Posterior cingulate gyrus (tissue), 11 donors: ENCODE measurements at regions of chr9 and their contacts with region 1.

Region 1: DNA sequence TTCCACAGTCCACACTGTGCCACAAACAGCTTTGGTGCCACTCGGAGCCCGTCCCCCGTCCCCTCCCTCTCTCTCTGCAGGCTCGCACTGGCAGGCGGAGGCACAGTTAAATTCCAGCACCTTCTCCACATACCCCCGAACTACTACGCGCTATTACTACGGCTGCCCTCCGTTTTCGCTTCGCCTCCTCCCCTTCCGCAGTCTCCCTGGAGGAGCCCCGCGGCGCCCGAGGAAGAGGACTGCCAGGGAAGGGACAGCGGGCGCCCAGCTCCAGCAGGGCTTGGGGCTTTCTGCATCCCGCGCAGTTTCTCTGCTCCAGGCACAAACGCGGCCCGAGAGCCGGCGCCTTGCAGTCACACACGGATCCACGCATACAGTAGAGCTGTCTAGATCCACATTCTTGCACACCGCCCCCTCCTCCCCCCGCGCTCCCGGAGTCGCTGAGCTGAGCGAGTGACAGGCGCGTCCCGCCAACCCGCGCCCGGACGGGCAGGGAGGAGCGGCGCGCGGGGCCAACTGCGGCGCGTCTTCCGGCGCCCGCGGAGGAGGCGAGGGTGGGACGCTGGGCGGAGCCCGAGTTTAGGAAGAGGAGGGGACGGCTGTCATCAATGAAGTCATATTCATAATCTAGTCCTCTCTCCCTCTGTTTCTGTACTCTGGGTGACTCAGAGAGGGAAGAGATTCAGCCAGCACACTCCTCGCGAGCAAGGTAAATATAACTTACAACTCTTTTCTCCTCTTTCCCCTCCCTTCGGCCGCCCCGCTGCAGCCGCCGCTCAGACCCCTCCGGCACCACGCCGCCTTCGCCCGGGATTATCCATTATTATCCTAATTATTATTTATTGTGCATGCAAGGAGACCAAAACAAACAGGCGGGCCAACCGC is at the start of gene SMARCA2:
- DNase-seq: peak; percentile 93 to 100 (median 99)

Region 2: DNA sequence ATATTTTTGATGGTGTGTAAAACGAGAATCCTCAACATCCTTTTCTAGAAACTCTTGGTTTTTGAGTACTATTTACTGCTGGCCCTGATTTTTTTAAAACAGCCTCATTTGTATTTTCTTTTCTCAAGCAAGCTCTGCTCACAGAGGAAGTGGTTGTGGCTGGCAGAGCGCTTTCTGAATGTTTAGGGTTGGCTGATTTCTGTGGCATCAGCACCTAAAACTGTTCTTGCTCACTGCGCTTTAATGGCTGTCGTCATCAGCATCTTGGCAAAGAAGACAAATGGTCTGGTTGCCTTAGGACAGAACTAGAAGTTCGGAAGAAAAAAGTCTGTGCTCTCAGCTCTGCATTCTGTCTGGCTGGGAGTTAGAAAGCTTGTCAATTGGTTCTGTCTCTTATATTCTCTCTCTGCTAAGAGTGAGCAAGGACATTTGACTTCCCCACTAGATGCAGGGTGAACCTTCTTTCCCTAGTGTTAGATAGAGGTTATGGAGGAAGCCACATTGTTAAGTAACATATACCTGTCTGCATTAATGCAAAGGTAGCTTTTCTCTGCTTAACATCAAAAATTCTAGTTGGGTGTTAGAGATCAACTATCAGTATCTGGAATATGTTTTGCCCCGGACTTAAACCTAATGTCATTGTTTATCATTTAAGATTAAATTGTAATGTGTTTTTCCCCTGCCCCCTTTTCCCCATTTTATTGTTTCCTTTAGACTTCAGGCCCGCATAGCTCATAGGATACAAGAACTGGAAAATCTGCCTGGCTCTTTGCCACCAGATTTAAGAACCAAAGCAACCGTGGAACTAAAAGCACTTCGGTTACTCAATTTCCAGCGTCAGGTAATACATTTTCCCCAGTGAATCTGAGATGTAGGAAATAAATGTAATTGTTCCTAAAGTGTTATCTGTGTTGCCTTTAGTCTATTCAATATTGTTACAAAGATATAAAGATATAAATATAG is 39.2 kb after region 1 on chr9:
- intact Hi-C with region 1: loop called (anchors 5 kb)
- DNase-seq: peak in 6 of 10 donors; percentile 24 to 84 (median 41)

Region 3: GRCh38 chr9:2299156-2299842 is 284.4 kb after region 1 on chr9:
- intact Hi-C with region 1: no loop called
- DNase-seq: no peak

Region 4: DNA sequence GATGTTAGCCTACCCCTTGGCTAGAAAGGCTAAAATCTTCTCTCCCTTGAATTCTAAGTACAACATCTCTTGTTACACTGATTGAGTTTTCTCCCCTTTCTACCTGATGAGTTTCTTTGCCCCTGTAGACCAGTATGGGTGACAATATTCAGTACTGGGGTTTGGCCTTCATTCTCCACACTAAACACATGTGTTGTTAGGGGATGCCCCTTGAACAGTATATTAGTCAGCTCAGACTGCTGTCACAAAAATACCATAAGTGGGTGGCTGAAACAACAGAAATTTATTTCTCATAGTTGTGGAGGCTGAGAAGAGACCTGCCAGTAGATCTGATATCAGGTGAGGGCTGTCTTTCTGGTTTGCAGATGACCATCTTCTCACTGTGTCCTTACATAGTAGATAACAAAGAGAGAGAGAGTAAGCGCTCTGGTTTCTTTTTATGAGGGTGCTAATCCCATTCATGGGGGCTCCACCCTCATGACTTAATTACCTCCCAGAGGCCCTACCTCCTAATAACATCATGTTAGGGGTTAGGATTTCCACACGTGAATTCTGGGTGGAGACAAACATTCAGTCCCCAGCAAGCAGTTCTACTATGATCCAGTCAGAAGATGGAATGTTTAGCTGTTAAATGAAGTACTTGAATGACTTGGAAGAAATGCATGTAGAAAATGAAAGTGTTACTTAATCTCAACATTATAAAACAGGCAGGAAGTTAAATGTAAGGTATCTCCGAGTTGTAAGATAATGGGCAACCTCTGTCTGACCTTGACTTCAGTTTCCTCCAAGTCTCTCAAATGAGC is 624.1 kb after region 1 on chr9:
- intact Hi-C with region 1: loop called (anchors 10 kb)
- DNase-seq: no peak

Region 5: DNA sequence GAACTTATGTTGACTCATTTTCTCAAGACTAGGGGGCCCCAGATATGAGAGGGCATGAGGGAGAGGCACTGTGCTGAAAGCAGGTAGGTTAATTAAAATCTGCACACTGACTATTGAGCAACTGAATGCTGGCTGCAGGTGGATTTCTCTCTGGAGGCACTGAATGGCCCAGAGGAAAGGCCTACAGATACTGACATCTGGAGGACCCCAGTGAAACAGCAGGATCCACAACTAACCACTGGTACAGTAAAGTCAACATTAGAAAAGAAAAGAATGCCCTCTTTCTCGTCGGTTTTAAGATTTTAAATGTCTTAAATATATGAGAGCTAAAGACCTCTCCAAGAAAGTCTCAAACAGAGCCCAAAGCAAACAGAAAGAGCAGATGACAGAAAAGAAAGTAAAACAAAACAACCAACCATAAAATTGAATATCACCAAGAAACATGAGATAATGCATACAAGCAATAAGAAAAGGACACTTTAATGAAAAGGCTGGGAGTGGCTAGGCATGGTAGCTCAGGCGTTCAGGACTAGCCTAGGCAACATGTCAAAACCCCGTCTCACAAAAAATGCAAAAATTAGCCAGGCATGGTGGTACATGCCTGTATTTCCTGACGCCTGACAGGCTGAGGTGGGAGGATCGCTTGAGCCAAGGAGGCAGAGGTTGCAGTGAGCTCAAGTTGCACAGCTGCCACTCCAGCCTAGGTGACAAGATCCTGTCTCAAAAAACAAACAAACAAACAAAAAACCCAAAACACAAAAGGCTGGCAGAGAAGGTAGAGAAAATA is 785.6 kb after region 1 on chr9:
- intact Hi-C with region 1: no loop called
- DNase-seq: no peak

Region 6: DNA sequence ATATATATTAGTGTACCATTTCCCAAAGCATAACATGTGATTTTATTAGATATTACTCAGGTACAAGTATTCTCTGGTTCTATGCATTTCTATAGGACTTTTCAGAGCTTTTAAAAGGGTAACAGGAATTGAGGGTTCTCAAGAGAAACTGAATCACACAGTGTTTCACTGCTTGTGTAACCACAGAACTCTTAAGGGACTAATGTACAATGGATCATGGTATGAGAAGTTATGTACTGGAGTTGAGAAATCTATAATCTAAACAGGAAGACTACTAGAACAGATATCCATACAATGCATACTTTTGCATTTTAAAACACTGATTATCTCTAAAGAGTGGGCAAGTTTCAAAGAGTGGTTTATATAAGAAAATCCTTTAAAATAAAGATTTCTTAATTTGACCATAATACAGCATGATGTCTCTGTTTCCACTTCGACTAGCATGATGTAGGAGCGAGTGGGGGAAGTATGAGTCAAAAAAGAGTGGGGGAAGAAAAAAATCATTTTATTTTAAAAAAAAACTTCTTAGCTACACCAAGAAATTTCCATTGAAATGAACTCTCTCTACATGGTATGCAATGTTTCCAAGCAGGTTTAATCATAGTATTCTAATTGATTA is 1327.3 kb after region 1 on chr9:
- intact Hi-C with region 1: no loop called
- DNase-seq: no peak